ENCODE measurements at regions of chr3 and their contacts with region 1.

Region 1: GRCh38 chr3:188947401-188948280 is 224.1 kb upstream of the TPRG1 start:
- DNase-seq: peak; percentile 94 to 96
- ATAC-seq: peak; percentile 92
- H3K4me3 ChIP-seq: no peak overlapping the region
- H3K27ac ChIP-seq: peak overlapping the region; percentile 94 to 100
- H3K4me1 ChIP-seq: peaks cover 9 to 15% of the 10 kb centered on the region in 2 donors
- H3K27me3 ChIP-seq: no peaks in the 10 kb centered on the region

Region 2: DNA sequence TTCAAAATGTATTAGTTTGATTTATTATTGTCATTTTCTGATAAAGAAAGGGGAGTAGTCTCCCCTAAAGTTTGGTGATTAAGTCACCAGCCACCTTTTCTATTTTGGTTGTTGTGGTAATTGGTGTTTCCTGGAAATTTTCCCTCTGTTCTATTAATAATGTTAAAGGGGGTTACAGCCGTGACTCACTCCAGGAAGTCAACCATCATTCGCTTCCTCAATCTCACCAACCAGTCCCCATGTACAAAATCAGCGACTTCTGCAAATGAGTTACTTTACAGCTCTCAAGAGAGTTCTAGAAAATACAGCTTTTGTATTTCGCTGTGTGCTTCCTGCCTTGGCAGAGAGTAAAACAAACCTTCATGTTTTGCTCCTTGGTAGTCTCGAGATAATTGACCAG is 508.6 kb before region 1 on chr3:
- intact Hi-C with region 1: loop called in 1 of 2 experiments (anchors 10 kb)
- DNase-seq: no peak
- ATAC-seq: peak; percentile 63
- H3K4me3 ChIP-seq: no peak overlapping the region
- H3K27ac ChIP-seq: peak overlapping the region in 1 of 2 donors; percentile 50
- H3K4me1 ChIP-seq: peaks cover 7 to 11% of the 10 kb centered on the region in 2 donors
- H3K27me3 ChIP-seq: no peaks in the 10 kb centered on the region

Region 3: GRCh38 chr3:188578576-188579363 is 368.9 kb before region 1 on chr3:
- intact Hi-C with region 1: loop called in 1 of 2 experiments (anchors 10 kb)
- DNase-seq: peak; percentile 77 to 86
- ATAC-seq: peak; percentile 88
- H3K4me3 ChIP-seq: no peak overlapping the region
- H3K27ac ChIP-seq: peak overlapping the region; percentile 79 to 100
- H3K4me1 ChIP-seq: peaks cover 6 to 15% of the 10 kb centered on the region in 2 donors
- H3K27me3 ChIP-seq: no peaks in the 10 kb centered on the region

Region 4: GRCh38 chr3:188627652-188628051 is 320.0 kb before region 1 on chr3:
- intact Hi-C with region 1: loop called in 1 of 2 experiments (anchors 10 kb)
- DNase-seq: no peak
- ATAC-seq: no peak
- H3K4me3 ChIP-seq: no peak overlapping the region
- H3K27ac ChIP-seq: no peak overlapping the region
- H3K4me1 ChIP-seq: peaks cover 6 to 9% of the 10 kb centered on the region in 2 donors
- H3K27me3 ChIP-seq: no peaks in the 10 kb centered on the region

Region 5: DNA sequence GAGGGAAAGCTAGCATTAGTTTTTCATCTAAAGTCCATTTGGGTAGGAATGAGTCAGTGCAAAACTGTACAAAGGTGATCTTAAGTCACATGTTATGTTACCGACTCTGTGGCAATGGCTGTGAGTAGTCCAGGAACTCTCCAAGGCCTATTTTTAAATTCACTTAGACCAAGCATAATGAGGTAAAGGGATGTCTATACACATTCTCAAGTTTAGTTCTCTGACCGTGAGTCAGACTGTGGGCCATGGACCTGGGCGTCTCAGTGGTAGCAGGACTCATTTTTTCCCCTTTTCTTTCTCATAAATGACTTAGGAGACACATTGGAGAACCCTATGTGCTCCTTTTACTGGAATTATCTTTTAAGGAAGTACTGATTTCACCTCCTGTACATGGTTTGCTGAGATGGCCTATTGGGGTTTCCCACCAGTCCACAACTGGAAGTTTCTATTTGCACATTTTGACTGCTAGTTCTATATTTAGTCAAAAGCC is 264.6 kb before region 1 on chr3:
- intact Hi-C with region 1: loop called in 1 of 2 experiments (anchors 10 kb)
- DNase-seq: peak in 1 of 2 donors; percentile 69
- ATAC-seq: peak; percentile 76
- H3K4me3 ChIP-seq: no peak overlapping the region
- H3K27ac ChIP-seq: peak overlapping the region in 1 of 2 donors; percentile 32
- H3K4me1 ChIP-seq: peaks cover 13 to 34% of the 10 kb centered on the region in 2 donors
- H3K27me3 ChIP-seq: no peaks in the 10 kb centered on the region

Region 6: DNA sequence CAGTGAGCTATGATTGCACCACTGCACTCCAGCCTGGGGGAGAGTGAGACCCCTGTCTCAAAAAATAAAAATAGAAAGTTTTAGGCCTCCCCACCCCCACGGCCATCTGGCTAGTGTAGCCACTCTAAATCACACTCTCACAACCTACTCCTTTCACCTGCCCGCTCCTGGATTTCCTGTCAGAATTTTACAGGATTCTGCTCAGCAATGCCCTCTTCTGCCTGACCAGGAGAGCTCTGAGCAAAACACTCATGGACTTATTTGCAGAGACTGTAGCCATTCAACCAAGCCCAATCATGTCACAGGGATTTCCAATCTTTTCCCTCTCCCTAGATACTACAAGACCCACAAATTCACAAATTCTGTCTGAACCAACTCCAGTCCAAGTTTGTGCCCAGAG is 18.5 kb before region 1 on chr3:
- intact Hi-C with region 1: no loop called
- DNase-seq: no peak
- ATAC-seq: no peak
- H3K4me3 ChIP-seq: no peak overlapping the region
- H3K27ac ChIP-seq: no peak overlapping the region
- H3K4me1 ChIP-seq: peaks cover 3 to 8% of the 10 kb centered on the region in 2 donors
- H3K27me3 ChIP-seq: no peaks in the 10 kb centered on the region

Measured in aorta (tissue), 5 donors.